Posterior vena cava (tissue), 2 donors: ENCODE measurements at regions of chr1 and their contacts with region 1.

Region 1: DNA sequence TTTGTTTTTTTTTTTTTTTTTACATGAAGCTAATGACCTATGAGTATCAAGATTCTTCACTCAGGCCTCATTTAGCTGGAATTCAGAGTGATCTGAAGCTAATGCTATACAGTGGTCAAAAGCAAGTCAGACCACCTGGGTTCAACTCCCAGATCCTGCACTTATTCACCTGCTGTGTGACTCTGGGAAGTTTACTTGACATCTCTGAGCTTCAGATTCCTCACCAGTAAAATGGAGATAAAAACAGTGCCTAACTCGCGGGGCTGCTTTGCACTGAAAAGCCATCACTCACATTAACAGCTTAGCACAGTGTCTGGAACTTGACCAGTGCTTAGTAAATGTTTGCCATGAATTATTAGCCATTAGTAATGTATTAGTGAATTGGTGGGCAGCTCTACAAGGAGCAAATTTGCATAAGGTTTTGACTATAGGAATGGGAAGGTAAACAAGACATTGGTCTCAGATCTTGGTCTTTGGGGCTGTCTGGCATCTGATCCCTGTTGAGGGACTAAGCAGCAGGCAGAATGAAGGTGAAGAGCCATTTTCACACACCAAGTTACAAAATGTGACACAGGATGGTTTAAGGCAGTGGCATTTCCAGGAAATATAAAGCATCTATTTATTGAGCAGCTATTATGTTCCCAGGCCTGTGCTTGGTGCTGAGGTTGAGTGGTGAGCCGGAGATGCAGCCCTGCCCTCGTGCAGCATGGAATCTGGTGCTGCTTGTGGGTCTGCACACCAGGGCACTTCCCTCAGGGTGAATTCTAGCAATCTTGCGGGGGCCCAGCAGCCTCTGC is 291.3 kb downstream of the RRAGC start:
- DNase-seq: no peak

Region 2: DNA sequence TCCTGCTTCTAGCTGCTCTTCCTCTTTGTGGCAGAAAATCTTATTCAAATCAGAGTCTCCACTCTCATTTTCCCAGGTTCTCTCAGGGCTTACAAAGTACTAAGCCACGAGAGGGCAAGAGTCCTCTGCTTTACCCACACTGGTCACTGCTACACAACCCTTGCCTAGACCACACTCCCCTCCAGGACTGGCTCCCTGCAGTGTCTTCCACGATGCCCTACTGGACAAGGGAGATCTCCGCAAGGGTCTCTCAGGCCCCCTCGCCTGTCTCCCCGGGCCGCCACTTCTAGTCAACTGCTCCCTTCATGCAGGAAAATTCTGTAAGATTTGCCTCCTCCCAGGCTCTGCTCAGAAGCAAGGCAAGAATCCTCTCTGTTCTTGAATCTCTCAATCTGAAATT is 28.3 kb before region 1 on chr1:
- intact Hi-C with region 1: loop called in 1 of 2 experiments (anchors 1 kb)
- DNase-seq: no peak

Region 3: GRCh38 chr1:38834937-38835827 is 266.9 kb after region 1 on chr1:
- intact Hi-C with region 1: no loop called
- DNase-seq: no peak

Region 4: GRCh38 chr1:38908821-38909220 is 340.6 kb after region 1 on chr1:
- intact Hi-C with region 1: no loop called
- DNase-seq: no peak